CD4-positive, alpha-beta memory T cell (primary cell): ENCODE measurements at regions of chr5 and their contacts with region 1.

Region 1: DNA sequence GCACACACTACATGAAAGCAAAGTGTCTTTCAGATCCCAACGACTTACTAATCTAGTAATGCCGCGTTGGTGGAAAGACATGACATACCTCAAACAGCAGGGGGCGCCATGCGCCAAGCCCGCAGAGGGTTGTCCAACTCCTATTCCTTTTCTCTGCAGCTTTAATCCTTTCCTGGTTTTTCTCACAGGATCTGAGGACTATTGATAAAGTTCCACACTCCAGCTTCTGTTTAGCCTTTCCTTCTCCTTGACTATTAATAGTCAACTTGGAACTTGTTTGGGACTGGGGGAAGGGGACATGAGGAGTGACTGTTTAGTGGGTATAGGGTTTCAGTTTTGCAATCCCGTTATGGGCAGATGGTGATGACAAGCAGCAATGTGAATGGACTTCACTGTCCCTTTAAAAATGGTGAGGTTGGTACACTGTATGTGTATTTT is 62.9 kb downstream of the OTULIN start:
- DNase-seq: peak; percentile 66 to 75 (median 71)
- H3K4me3 ChIP-seq: no peak overlapping the region
- H3K4me3 Mint-ChIP-seq: no peak overlapping the region
- H3K27ac ChIP-seq: no peak overlapping the region
- H3K27ac Mint-ChIP-seq: peak overlapping the region in 4 of 7 donors; percentile 47 to 75 (median 60)
- H3K4me1 ChIP-seq: no peaks in the 10 kb centered on the region
- H3K4me1 Mint-ChIP-seq: peaks cover 8 to 15% (median 13%) of the 10 kb centered on the region in 4 donors
- H3K27me3 ChIP-seq: no peaks in the 10 kb centered on the region
- H3K27me3 Mint-ChIP-seq: no peaks in the 10 kb centered on the region

Region 2: DNA sequence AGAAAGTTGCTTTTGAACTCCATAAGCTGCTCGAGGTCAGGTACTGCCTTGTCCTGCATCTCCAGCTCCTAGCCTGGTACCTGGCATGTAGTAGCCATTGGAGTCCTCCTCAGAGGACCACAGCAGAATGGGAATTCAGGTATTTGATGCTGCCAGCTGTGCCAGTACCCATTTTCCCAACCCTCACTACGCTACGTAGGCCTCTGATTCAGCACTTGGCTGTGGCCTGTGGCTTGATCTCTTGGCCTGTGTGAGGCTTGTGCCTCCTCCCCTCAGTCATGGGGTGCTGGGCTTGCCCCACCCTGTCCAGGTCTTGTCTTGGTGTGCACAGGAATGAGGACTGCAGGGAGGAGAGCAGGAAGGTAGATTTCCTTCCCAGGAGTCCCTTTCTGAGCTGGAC is 51.1 kb before region 1 on chr5:
- CTCF ChIA-PET with region 1: interaction called, 96 read pairs
- POLR2A ChIA-PET with region 1: no interaction called
- intact Hi-C with region 1: no loop called
- DNase-seq: no peak
- H3K4me3 ChIP-seq: no peak overlapping the region
- H3K4me3 Mint-ChIP-seq: peak overlapping the region in 7 of 8 donors; percentile 65 to 78 (median 74)
- H3K27ac ChIP-seq: peak overlapping the region; percentile 61
- H3K27ac Mint-ChIP-seq: peak overlapping the region; percentile 78 to 93 (median 88)
- H3K4me1 ChIP-seq: peaks cover 57% of the 10 kb centered on the region
- H3K4me1 Mint-ChIP-seq: peaks cover 53 to 63% (median 58%) of the 10 kb centered on the region in 4 donors
- H3K27me3 ChIP-seq: no peaks in the 10 kb centered on the region
- H3K27me3 Mint-ChIP-seq: no peaks in the 10 kb centered on the region

Region 3: DNA sequence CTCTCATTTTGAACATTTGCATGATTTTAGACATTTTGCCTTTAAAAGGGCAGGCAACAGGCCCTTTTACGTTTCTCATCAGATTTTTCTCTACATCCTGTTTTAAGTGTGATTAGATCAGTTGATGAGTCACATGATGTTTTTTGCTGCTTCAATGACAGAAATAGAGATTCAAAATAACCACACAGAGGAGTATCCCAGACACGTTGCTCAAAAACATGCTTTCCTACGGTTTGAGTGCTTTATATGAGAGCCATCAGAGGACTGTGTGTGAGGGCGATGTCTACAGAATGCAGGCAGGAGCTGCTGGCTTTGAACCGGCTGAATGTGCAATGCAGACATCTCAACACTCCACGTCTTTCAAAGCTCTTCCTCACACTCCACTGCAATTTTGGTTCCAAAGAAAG is 20.8 kb before region 1 on chr5:
- CTCF ChIA-PET with region 1: interaction called, 64 read pairs
- POLR2A ChIA-PET with region 1: interaction called, 13 read pairs
- intact Hi-C with region 1: loop called (anchors 1 kb)
- DNase-seq: peak; percentile 67 to 80 (median 73)
- H3K4me3 ChIP-seq: peak overlapping the region in 1 of 2 donors; percentile 26
- H3K4me3 Mint-ChIP-seq: peak overlapping the region; percentile 81 to 90 (median 82)
- H3K27ac ChIP-seq: peak overlapping the region; percentile 49
- H3K27ac Mint-ChIP-seq: peak overlapping the region; percentile 94 to 99 (median 99)
- H3K4me1 ChIP-seq: peaks cover 76% of the 10 kb centered on the region
- H3K4me1 Mint-ChIP-seq: peaks cover 66 to 91% (median 80%) of the 10 kb centered on the region in 4 donors
- H3K27me3 ChIP-seq: no peaks in the 10 kb centered on the region
- H3K27me3 Mint-ChIP-seq: no peaks in the 10 kb centered on the region

Region 4: DNA sequence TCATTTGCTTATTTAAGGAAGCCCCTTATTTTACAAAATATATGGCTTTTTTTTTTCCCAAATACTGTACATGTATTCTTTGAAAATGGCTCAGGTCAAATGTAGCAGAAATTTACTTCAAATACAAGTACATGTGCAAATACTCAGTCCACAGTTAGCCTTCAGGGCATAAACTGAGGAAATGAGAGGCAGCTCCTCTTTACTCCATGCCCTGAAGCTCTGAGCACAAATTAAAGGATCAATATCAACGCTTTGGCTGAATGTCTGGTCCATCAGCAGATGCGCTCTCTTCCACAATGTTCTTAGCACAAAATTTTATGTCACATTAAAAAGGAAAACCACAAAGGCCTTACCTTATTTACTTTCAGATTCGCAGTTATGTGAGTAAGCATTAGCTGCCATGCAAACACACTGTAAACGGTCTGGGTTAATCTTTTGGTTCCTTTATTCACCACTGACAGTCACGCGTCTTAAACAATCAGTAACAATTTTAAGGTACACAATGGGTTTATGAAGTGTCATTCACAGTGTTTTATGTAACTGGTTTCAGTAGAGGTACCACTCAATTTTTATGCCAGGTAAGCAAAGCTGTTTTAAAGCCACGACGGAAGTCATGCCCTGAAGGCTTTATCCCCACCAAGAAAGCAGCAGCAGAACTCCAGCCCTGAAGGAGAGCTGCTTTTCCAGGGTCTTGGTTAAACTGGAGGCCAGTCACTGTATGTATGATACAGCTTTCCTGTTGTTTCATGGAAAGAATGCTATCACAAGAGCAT is 40.5 kb after region 1 on chr5:
- CTCF ChIA-PET with region 1: interaction called, 15 read pairs
- POLR2A ChIA-PET with region 1: no interaction called
- intact Hi-C with region 1: no loop called
- DNase-seq: peak in 1 of 5 donors; percentile 6
- H3K4me3 ChIP-seq: no peak overlapping the region
- H3K4me3 Mint-ChIP-seq: peak overlapping the region in 4 of 8 donors; percentile 2 to 44 (median 18)
- H3K27ac ChIP-seq: no peak overlapping the region
- H3K27ac Mint-ChIP-seq: peak overlapping the region; percentile 19 to 82 (median 63)
- H3K4me1 ChIP-seq: peaks cover 13% of the 10 kb centered on the region
- H3K4me1 Mint-ChIP-seq: peaks cover 20 to 42% (median 31%) of the 10 kb centered on the region in 4 donors
- H3K27me3 ChIP-seq: no peaks in the 10 kb centered on the region
- H3K27me3 Mint-ChIP-seq: no peaks in the 10 kb centered on the region

Region 5: DNA sequence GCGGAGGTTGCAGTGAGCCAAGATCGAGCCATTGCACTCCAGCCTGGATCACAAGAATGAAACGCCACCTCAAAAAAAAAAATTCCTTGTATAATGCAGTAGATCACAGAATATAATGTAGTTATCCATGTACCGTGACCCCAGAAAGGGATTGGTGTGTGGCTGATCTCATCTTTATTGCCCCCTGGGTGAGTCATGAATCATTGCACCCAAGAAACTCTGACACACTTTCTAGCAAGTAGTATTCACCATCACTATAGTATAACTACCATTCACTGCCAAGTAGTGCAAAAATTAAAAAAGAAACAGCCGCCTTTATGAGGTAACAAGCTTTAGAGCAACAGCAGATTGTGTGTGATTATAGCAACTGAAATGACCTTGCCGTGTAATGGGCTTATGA is 167.9 kb after region 1 on chr5:
- CTCF ChIA-PET with region 1: interaction called, 14 read pairs
- POLR2A ChIA-PET with region 1: no interaction called
- intact Hi-C with region 1: loop called (anchors 1 kb)
- DNase-seq: peak in 2 of 5 donors; percentile 3 to 9
- H3K4me3 ChIP-seq: no peak overlapping the region
- H3K4me3 Mint-ChIP-seq: no peak overlapping the region
- H3K27ac ChIP-seq: no peak overlapping the region
- H3K27ac Mint-ChIP-seq: no peak overlapping the region
- H3K4me1 ChIP-seq: no peaks in the 10 kb centered on the region
- H3K4me1 Mint-ChIP-seq: no peaks in the 10 kb centered on the region
- H3K27me3 ChIP-seq: no peaks in the 10 kb centered on the region
- H3K27me3 Mint-ChIP-seq: peaks cover 0 to 1% of the 10 kb centered on the region in 2 donors

Region 6: GRCh38 chr5:14996997-14997396 is 269.6 kb after region 1 on chr5:
- CTCF ChIA-PET with region 1: interaction called, 134 read pairs
- POLR2A ChIA-PET with region 1: no interaction called
- intact Hi-C with region 1: no loop called
- DNase-seq: no peak
- H3K4me3 ChIP-seq: no peak overlapping the region
- H3K4me3 Mint-ChIP-seq: no peak overlapping the region
- H3K27ac ChIP-seq: no peak overlapping the region
- H3K27ac Mint-ChIP-seq: no peak overlapping the region
- H3K4me1 ChIP-seq: peaks cover 7% of the 10 kb centered on the region
- H3K4me1 Mint-ChIP-seq: peaks cover 5 to 15% (median 9%) of the 10 kb centered on the region in 4 donors
- H3K27me3 ChIP-seq: no peaks in the 10 kb centered on the region
- H3K27me3 Mint-ChIP-seq: peaks cover 3 to 7% of the 10 kb centered on the region in 2 donors

Region 7: GRCh38 chr5:15105796-15106393 is 378.4 kb after region 1 on chr5:
- CTCF ChIA-PET with region 1: no interaction called
- POLR2A ChIA-PET with region 1: no interaction called
- intact Hi-C with region 1: no loop called
- DNase-seq: peak in 3 of 5 donors; percentile 3 to 11 (median 4)
- H3K4me3 ChIP-seq: no peak overlapping the region
- H3K4me3 Mint-ChIP-seq: no peak overlapping the region
- H3K27ac ChIP-seq: no peak overlapping the region
- H3K27ac Mint-ChIP-seq: no peak overlapping the region
- H3K4me1 ChIP-seq: no peaks in the 10 kb centered on the region
- H3K4me1 Mint-ChIP-seq: peaks cover 1 to 6% (median 3%) of the 10 kb centered on the region in 4 donors
- H3K27me3 ChIP-seq: no peaks in the 10 kb centered on the region
- H3K27me3 Mint-ChIP-seq: peaks cover 0 to 2% of the 10 kb centered on the region in 2 donors

Region 8: DNA sequence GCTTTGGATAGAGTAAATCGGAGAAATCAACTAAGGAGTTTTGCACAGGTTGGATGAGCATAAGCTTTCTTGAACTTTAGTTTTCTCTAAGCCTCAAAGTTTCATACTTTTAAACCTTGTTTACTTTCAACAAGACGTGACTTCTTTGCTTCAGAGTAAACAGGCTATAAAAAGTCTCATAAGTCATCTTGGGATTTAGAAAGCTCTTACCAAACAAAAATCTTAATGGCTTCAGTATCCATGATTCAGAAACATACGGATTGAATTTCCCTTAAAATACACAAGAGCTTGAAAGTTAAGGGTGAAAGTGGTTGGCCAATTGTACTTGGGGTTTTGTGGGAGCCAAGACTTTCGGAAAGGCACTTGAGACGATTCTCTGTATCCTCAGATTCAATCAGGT is 415.0 kb after region 1 on chr5:
- CTCF ChIA-PET with region 1: no interaction called
- POLR2A ChIA-PET with region 1: no interaction called
- intact Hi-C with region 1: no loop called
- DNase-seq: no peak
- H3K4me3 ChIP-seq: no peak overlapping the region
- H3K4me3 Mint-ChIP-seq: no peak overlapping the region
- H3K27ac ChIP-seq: no peak overlapping the region
- H3K27ac Mint-ChIP-seq: no peak overlapping the region
- H3K4me1 ChIP-seq: no peaks in the 10 kb centered on the region
- H3K4me1 Mint-ChIP-seq: no peaks in the 10 kb centered on the region
- H3K27me3 ChIP-seq: no peaks in the 10 kb centered on the region
- H3K27me3 Mint-ChIP-seq: no peaks in the 10 kb centered on the region